Astrocyte of the cerebellum (primary cell): ENCODE measurements at regions of chr12 and their contacts with region 1.

Region 1: DNA sequence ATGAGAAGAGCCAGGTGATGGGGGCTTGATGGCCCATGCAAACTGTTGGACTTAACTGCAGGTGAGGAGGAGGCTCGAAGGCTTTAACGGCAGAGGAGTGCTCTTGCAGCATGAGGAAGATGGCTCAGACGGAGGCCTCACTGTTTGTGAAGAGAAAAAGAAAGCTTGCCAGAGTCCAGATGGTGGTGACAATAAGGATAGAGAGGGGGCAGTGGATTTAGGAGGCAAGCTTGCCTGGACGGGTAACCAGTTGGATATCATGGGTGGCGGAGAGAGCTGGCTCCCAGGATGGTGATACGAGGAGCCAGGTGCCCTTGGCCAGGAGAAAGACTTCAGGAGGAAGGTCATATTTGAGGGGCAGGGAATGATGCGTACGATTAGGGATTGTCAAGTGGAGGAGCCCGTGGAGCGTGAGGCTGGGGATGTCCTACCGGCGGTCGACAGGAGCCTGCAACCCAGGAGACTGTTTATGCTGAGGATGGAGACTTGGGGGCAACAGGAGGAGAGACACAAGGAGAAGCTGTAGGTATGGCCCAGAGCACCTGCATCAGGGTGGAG is 71.8 kb downstream of the CACNA1C start:
- DNase-seq: no peak
- H3K4me3 ChIP-seq: no peak overlapping the region
- CTCF ChIP-seq: no peak

Region 2: DNA sequence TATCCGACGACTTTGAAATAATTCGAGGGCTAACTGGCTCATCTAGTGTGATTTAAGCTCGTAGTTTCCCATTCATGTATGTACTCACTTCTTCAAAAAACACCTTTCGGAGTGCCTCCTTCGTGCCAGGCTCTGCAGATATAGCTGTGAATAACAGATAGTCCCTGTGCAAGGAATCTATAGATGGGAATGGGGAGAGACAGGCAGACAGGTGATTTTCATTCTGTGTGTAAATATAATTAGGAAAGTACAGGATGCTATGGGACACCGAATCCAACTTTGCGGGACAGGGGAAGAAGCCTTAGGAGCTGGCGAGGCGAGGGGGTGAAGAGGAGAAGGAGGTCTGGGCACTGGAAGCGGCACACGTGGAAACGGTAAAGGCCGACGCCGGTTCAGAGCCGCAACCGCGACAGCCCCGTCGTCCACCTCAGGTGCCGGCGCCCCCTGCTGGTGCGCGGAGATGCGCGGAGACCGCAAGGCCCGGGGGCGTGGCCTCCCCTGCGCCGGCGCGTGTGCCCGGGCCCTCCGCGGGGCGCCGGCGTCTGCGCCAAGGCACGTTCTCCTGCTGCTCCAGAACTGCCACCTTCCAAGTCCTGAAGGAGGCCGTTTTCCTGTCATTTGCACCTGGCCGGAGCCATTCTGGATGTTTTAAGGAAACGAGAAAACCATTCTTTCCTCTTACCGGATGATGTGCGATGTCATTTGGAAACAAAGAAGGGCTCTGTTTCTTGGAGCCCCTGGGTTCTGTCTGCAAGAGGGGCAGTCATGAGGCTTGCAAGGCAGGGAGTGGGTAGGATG is 89.7 kb before region 1 on chr12:
- in situ Hi-C with region 1: loop called (anchors 5 kb)
- DNase-seq: peak; percentile 20
- H3K4me3 ChIP-seq: peak overlapping the region; percentile 22
- CTCF ChIP-seq: peak; percentile 62